Activated CD4-positive, alpha-beta T cell treated with anti-CD3 and anti-CD28 coated beads for 36 hours (primary cell): ENCODE measurements at regions of chr5 and their contacts with region 1.

Region 1: DNA sequence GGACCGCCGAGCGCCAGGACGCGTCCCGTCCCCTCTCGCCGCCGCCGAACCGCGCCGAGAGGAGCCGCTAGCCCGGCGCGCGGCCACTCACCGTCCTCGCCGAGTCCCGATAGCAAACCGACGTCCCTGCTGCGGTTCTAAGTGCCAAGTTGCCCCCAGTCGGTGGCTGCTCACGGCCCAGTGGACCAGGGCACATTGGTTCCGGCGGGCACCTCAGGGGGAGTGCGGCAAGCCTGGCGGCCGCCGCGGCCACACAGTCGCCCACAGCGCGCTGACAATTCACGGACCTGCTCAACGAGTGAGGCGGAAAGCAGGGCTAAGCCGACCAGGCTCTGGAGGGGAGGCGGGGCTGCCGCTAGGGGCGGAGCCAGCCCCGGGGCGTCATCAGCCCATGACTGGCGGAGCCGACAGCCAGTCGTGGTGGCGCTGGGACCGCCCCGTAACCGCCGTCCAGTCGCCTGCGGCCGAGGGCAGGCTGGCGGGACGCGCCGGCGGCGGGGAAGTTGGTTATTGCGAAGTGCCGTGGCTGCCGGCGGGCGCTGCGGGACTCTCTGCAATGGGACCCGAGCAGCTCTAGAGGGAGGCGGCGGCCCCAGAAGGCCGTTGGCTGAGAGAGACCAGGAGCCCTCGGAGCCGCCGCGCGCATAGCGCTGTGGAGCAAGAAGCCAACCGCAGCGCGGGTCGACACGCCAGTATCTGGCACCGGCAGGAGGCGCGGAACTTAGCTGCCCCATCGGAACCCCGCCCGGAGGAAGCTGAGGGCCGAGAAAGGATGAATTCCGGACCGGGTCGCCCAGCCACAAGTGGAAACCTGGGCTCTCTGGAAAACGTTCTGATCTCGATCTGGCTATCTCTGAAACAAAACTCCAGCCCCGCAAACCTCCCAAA is at the start of gene MARCHF3:
- DNase-seq: peak; percentile 96
- ATAC-seq: peak; percentile 98
- H3K4me3 Mint-ChIP-seq: peak within 1 kb of the TSS; percentile 83
- H3K27ac Mint-ChIP-seq: peak within 1 kb of the TSS; percentile 78
- H3K4me1 Mint-ChIP-seq: peaks cover 16% of the 10 kb centered on the region
- H3K27me3 Mint-ChIP-seq: no peaks in the 10 kb centered on the region
- total RNA-seq, gene MARCHF3: 3.6 to 4.2 TPM

Region 2: GRCh38 chr5:126600631-126601511 is 429.6 kb before region 1 on chr5 and contains the start of gene PHAX:
- CTCF ChIA-PET with region 1: interaction called, 3 read pairs
- POLR2A ChIA-PET with region 1: no interaction called
- intact Hi-C with region 1: loop called in 1 of 2 experiments (anchors 2 kb)
- DNase-seq: peak; percentile 87
- ATAC-seq: peak; percentile 94
- H3K4me3 Mint-ChIP-seq: peak within 1 kb of the TSS; percentile 97
- H3K27ac Mint-ChIP-seq: peak within 1 kb of the TSS; percentile 99
- H3K4me1 Mint-ChIP-seq: peaks cover 38% of the 10 kb centered on the region
- H3K27me3 Mint-ChIP-seq: no peaks in the 10 kb centered on the region
- total RNA-seq, gene PHAX: 41.4 to 49.1 TPM

Region 3: GRCh38 chr5:126776497-126777256 is 253.8 kb before region 1 on chr5 and contains the start of gene LMNB1:
- CTCF ChIA-PET with region 1: no interaction called
- POLR2A ChIA-PET with region 1: interaction called, 4 read pairs
- intact Hi-C with region 1: loop called (anchors 1 to 2 kb)
- DNase-seq: peak; percentile 97
- ATAC-seq: peak; percentile 70
- H3K4me3 Mint-ChIP-seq: peak within 1 kb of the TSS; percentile 97
- H3K27ac Mint-ChIP-seq: peak within 1 kb of the TSS; percentile 99
- H3K4me1 Mint-ChIP-seq: peaks cover 32% of the 10 kb centered on the region
- H3K27me3 Mint-ChIP-seq: no peaks in the 10 kb centered on the region
- total RNA-seq, gene LMNB1: 209 to 240 TPM

Region 4: GRCh38 chr5:126917918-126918614 is 112.4 kb before region 1 on chr5:
- CTCF ChIA-PET with region 1: no interaction called
- POLR2A ChIA-PET with region 1: no interaction called
- intact Hi-C with region 1: no loop called
- DNase-seq: no peak
- ATAC-seq: no peak
- H3K4me3 Mint-ChIP-seq: no peak overlapping the region
- H3K27ac Mint-ChIP-seq: no peak overlapping the region
- H3K4me1 Mint-ChIP-seq: peaks cover 3% of the 10 kb centered on the region
- H3K27me3 Mint-ChIP-seq: no peaks in the 10 kb centered on the region

Region 5: GRCh38 chr5:126972062-126972895 is 58.2 kb before region 1 on chr5:
- CTCF ChIA-PET with region 1: no interaction called
- POLR2A ChIA-PET with region 1: no interaction called
- intact Hi-C with region 1: loop called in 1 of 2 experiments (anchors 1 kb)
- DNase-seq: peak; percentile 40
- ATAC-seq: peak; percentile 85
- H3K4me3 Mint-ChIP-seq: peak overlapping the region; percentile 46
- H3K27ac Mint-ChIP-seq: peak overlapping the region; percentile 94
- H3K4me1 Mint-ChIP-seq: peaks cover 28% of the 10 kb centered on the region
- H3K27me3 Mint-ChIP-seq: no peaks in the 10 kb centered on the region

Region 6: DNA sequence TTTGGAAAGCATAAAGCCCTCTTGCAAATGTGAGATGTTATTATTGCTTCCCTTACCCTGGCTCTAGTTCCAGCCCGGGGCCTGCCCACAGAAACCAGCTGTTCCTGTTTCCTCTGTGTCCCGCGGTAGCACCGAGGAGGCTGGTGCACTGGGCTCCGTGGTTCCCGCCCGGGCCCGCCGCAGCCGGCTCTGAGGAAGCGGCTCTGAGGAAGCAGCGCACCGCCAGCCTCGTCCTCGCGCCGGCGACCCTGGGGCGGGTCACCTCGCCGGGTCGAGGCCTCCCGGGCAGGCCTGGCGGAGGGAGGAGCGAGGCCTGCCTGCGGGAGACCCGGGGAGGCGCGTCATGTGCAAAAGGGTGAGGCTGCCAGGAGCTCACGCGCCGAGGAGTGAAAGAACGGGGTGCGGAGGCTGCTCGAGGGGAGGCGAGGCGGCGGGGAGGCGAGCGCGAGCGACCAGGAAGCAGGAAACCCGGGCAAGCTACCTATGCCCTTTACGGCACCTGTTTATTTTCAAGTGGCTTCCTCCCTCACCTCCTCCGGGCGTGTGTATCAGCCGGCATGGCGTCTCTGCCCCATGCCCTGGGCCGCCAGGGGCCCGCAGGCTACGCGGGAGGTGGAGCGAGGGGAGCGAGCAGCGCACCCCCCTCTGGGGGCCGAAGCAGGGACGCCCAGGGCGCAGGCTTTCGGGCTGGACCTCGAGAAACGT is 198.8 kb after region 1 on chr5:
- CTCF ChIA-PET with region 1: no interaction called
- POLR2A ChIA-PET with region 1: no interaction called
- intact Hi-C with region 1: loop called in 1 of 2 experiments (anchors 2 kb)
- DNase-seq: peak; percentile 68
- ATAC-seq: peak; percentile 83
- H3K4me3 Mint-ChIP-seq: peak overlapping the region; percentile 56
- H3K27ac Mint-ChIP-seq: peak overlapping the region; percentile 44
- H3K4me1 Mint-ChIP-seq: peaks cover 18% of the 10 kb centered on the region
- H3K27me3 Mint-ChIP-seq: no peaks in the 10 kb centered on the region

Region 7: GRCh38 chr5:127595484-127596368 is 565.2 kb after region 1 on chr5:
- CTCF ChIA-PET with region 1: no interaction called
- POLR2A ChIA-PET with region 1: no interaction called
- intact Hi-C with region 1: no loop called
- DNase-seq: no peak
- ATAC-seq: no peak
- H3K4me3 Mint-ChIP-seq: no peak overlapping the region
- H3K27ac Mint-ChIP-seq: no peak overlapping the region
- H3K4me1 Mint-ChIP-seq: peaks cover 10% of the 10 kb centered on the region
- H3K27me3 Mint-ChIP-seq: peaks cover under 1% of the 10 kb centered on the region